Posterior vena cava (tissue), 2 donors: ENCODE measurements at regions of chr1 and their contacts with region 1.

Region 1: DNA sequence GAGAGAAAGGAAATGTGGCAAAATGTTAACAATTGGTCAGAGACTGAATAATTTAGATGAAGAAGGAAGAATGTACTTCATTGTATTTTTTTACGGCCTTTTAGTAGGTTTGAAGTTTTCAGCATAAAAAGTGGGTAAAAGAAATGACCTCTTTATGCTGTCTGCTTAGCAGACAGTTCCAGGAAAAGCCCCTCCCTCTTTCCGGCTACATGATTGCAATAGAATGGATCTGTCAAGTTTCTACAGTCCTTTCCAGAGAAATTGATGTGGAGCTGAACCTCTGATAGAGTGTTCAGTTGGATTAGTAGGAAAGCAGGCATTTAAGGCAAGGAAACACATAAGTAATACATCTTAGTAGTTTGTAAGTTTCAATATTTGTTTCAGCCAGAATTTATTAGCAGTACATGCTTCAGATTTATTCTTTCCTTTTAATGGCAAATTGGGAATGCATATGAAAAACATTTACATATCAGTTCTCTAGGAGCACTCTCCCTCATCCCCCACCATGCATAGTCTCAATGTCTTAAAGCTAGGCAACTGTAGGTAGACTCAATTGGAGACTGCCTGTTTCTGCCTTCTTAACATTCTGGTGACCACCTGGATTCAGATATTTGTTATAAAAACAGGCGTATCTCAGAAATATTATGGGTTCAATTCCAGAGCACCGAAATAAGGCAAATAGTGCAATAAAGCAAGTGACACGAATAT is 36.4 kb downstream of the HS2ST1 start:
- DNase-seq: no peak

Region 2: GRCh38 chr1:86788300-86789206 is 162.3 kb before region 1 on chr1:
- intact Hi-C with region 1: loop called in 1 of 2 experiments (anchors 10 kb)
- DNase-seq: peak; percentile 82